Right lobe of liver (tissue), 6 donors: ENCODE measurements at regions of chr2 and their contacts with region 1.

Region 1: DNA sequence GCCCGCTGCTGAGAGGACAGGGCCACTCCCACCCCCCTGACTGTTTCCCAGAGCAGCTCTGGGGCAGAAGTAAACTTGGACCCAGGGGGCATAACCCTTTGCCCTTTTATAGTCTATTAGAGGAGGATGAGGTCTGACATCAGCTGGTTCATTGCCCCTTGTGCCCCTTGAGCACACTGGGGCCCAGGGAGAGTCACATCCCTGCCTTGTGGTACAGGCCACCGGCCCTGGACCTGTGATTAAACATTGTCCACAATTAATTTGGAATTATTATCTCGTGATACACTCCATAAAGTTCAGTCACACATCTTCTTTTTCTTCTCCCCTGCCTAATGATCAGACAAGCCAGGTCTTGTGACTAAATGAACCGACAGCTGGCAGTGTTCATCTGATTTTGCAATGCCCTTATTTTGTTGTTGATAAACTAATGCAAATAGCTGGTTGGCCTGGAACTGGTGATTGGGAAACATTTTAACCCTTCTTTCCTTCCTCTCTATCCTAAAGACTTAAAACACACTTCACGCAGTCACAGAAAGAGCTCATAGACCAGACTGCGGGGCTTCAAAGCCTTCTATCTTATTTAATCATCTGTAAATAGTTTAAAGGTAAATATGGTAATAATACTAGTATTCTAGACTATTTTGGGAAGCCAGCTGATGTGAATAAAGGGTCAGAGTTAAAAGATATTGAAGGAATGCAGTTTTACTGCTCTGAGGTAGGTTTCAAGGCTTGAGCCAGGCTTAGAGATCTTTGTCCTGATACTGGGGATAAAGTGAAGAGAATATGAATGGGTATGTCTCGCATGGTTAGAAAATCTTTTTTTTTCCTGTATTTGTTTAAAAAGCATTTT is 13.3 kb downstream of the IL1R1 start:
- DNase-seq: peak; percentile 65 to 90 (median 88)
- ATAC-seq: peak; percentile 86 to 94 (median 88)
- H3K4me3 ChIP-seq: no peak overlapping the region
- H3K27ac ChIP-seq: peak overlapping the region; percentile 69 to 91 (median 87)
- H3K4me1 ChIP-seq: peaks cover 0 to 57% (median 22%) of the 10 kb centered on the region in 4 donors
- H3K27me3 ChIP-seq: no peaks in the 10 kb centered on the region
- CTCF ChIP-seq: no peak
- POLR2A ChIP-seq: no peak

Region 2: DNA sequence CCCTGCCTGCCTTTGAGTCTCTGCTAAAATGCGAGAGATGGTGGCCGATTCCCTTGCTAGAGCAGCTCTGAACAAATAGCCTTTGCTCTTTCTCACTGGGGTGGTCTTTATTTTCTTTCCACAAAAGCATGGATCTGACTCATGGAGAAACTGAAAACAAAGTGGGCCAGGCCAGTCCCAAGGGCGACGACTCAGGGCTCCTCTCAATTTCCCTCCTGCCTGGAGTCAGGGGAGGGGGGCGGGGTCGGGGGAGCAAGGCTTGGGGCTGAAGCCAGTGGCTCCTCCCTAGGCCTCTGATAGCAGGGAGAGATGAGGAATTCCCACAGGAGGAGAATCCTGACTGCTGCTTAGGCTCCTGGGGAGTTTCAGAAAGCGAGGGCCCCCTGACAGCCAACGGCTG is 181.2 kb before region 1 on chr2:
- intact Hi-C with region 1: no loop called
- DNase-seq: no peak
- ATAC-seq: no peak
- H3K4me3 ChIP-seq: no peak overlapping the region
- H3K27ac ChIP-seq: no peak overlapping the region
- H3K4me1 ChIP-seq: peaks cover 0 to 5% (median 0%) of the 10 kb centered on the region in 4 donors
- H3K27me3 ChIP-seq: no peaks in the 10 kb centered on the region
- CTCF ChIP-seq: no peak
- POLR2A ChIP-seq: no peak

Region 3: GRCh38 chr2:102005989-102006885 is 149.6 kb before region 1 on chr2:
- intact Hi-C with region 1: no loop called
- DNase-seq: no peak
- ATAC-seq: peak; percentile 92 to 94 (median 93)
- H3K4me3 ChIP-seq: no peak overlapping the region
- H3K27ac ChIP-seq: no peak overlapping the region
- H3K4me1 ChIP-seq: peaks cover 0 to 7% (median 3%) of the 10 kb centered on the region in 4 donors
- H3K27me3 ChIP-seq: no peaks in the 10 kb centered on the region
- CTCF ChIP-seq: peak; percentile 71 to 79 (median 73)
- POLR2A ChIP-seq: no peak

Region 4: GRCh38 chr2:102020596-102021181 is 135.2 kb before region 1 on chr2:
- intact Hi-C with region 1: loop called in 1 of 2 experiments (anchors 10 kb)
- DNase-seq: peak; percentile 86 to 87 (median 87)
- ATAC-seq: peak; percentile 91 to 96 (median 94)
- H3K4me3 ChIP-seq: no peak overlapping the region
- H3K27ac ChIP-seq: peak overlapping the region in 2 of 3 donors; percentile 52 to 63
- H3K4me1 ChIP-seq: peaks cover 0 to 33% (median 10%) of the 10 kb centered on the region in 4 donors
- H3K27me3 ChIP-seq: no peaks in the 10 kb centered on the region
- CTCF ChIP-seq: peak; percentile 98 to 99 (median 98)
- POLR2A ChIP-seq: no peak